Heart left ventricle (tissue), 16 donors: ENCODE measurements at regions of chr10 and their contacts with region 1.

Region 1: GRCh38 chr10:74262856-74263255 is 111.8 kb downstream of the ADK start:
- DNase-seq: no peak
- ATAC-seq: no peak
- H3K4me3 ChIP-seq: no peak overlapping the region
- H3K27ac ChIP-seq: no peak overlapping the region
- H3K4me1 ChIP-seq: peaks cover 0 to 4% (median 0%) of the 10 kb centered on the region in 12 donors
- H3K27me3 ChIP-seq: no peaks in the 10 kb centered on the region
- CTCF ChIP-seq: no peak
- POLR2A ChIP-seq: no peak

Region 2: GRCh38 chr10:75019370-75019769 is 756.5 kb after region 1 on chr10:
- intact Hi-C with region 1: loop called (anchors 2 to 10 kb)
- DNase-seq: no peak
- ATAC-seq: no peak
- H3K4me3 ChIP-seq: no peak overlapping the region
- H3K27ac ChIP-seq: no peak overlapping the region
- H3K4me1 ChIP-seq: peaks cover 0 to 35% (median 11%) of the 10 kb centered on the region in 12 donors
- H3K27me3 ChIP-seq: no peaks in the 10 kb centered on the region
- CTCF ChIP-seq: peak in 8 of 12 donors; percentile 19 to 49 (median 34)
- POLR2A ChIP-seq: no peak

Region 3: GRCh38 chr10:75029857-75030256 is 767.0 kb after region 1 on chr10:
- intact Hi-C with region 1: loop called in 2 of 10 experiments (anchors 10 kb)
- DNase-seq: peak in 2 of 5 donors; percentile 72 to 74
- ATAC-seq: peak; percentile 34 to 63 (median 52)
- H3K4me3 ChIP-seq: no peak overlapping the region
- H3K27ac ChIP-seq: no peak overlapping the region
- H3K4me1 ChIP-seq: peaks cover 0 to 16% (median 5%) of the 10 kb centered on the region in 12 donors
- H3K27me3 ChIP-seq: no peaks in the 10 kb centered on the region
- CTCF ChIP-seq: no peak
- POLR2A ChIP-seq: no peak